ENCODE measurements at regions of chr9 and their contacts with region 1.

Region 1: DNA sequence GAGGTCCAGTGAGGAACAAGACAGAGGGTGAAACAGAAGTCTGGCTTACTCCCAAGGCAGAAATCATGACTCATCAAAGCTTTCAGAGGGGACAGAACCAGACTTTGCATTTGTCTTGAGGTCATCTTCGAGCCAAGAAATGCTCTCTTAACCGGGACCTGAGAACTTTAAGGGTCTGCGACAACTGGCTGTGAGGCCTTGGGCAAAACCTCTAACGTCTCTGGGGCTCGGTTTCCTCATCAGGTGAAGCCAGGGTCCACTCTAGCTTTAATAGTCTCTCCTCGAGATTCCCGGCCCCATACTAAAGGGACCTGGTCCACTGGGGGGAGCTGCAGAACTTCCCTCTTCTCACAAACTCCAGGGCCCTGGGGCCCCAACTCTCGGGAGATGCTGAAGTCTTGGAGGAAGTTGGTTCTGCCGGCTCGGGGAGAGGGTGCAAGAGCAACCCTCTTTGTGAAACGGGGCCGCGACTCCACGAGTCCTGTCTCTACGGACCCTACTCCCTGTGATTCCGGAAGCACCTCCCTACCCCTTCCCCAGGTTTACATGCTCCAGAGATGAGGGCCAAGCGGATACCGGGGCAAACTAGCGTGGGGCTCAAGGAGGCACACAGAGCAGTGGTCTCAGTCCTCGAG is 2.6 kb downstream of the GLIS3 start:
- DNase-seq: peak; percentile 12 to 47 (median 29)
- ATAC-seq: peak; percentile 55
- H3K4me3 ChIP-seq: peak overlapping the region; percentile 74
- H3K4me3 Mint-ChIP-seq: peak overlapping the region; percentile 93 to 98 (median 96)
- H3K27ac ChIP-seq: peak overlapping the region; percentile 68
- H3K27ac Mint-ChIP-seq: peak overlapping the region; percentile 80 to 97 (median 88)
- H3K4me1 ChIP-seq: peaks cover 0 to 4% of the 10 kb centered on the region in 2 donors
- H3K4me1 Mint-ChIP-seq: peaks cover 15 to 34% (median 21%) of the 10 kb centered on the region in 7 donors
- H3K27me3 ChIP-seq: no peaks in the 10 kb centered on the region
- H3K27me3 Mint-ChIP-seq: peaks cover 0 to 67% (median 28%) of the 10 kb centered on the region in 5 donors

Region 2: GRCh38 chr9:3473405-3473804 is 823.9 kb before region 1 on chr9:
- CTCF ChIA-PET with region 1: no interaction called
- POLR2A ChIA-PET with region 1: no interaction called
- intact Hi-C with region 1: loop called (anchors 5 kb)
- DNase-seq: no peak
- ATAC-seq: peak; percentile 57
- H3K4me3 ChIP-seq: no peak overlapping the region
- H3K4me3 Mint-ChIP-seq: no peak overlapping the region
- H3K27ac ChIP-seq: no peak overlapping the region
- H3K27ac Mint-ChIP-seq: peak overlapping the region in 1 of 9 donors; percentile 0
- H3K4me1 ChIP-seq: peaks cover 6 to 15% of the 10 kb centered on the region in 2 donors
- H3K4me1 Mint-ChIP-seq: peaks cover 24 to 60% (median 43%) of the 10 kb centered on the region in 7 donors
- H3K27me3 ChIP-seq: no peaks in the 10 kb centered on the region
- H3K27me3 Mint-ChIP-seq: no peaks in the 10 kb centered on the region

Region 3: GRCh38 chr9:4237748-4238511 is 59.3 kb before region 1 on chr9:
- CTCF ChIA-PET with region 1: no interaction called
- POLR2A ChIA-PET with region 1: interaction called, 4 read pairs
- intact Hi-C with region 1: loop called in 1 of 2 experiments (anchors 2 kb)
- DNase-seq: peak in 4 of 9 donors; percentile 7 to 26 (median 10)
- ATAC-seq: peak; percentile 56
- H3K4me3 ChIP-seq: peak overlapping the region; percentile 19
- H3K4me3 Mint-ChIP-seq: peak overlapping the region; percentile 43 to 85 (median 79)
- H3K27ac ChIP-seq: peak overlapping the region; percentile 14
- H3K27ac Mint-ChIP-seq: peak overlapping the region; percentile 35 to 88 (median 74)
- H3K4me1 ChIP-seq: peaks cover 0 to 14% of the 10 kb centered on the region in 2 donors
- H3K4me1 Mint-ChIP-seq: peaks cover 8 to 48% (median 39%) of the 10 kb centered on the region in 7 donors
- H3K27me3 ChIP-seq: no peaks in the 10 kb centered on the region
- H3K27me3 Mint-ChIP-seq: no peaks in the 10 kb centered on the region

Region 4: DNA sequence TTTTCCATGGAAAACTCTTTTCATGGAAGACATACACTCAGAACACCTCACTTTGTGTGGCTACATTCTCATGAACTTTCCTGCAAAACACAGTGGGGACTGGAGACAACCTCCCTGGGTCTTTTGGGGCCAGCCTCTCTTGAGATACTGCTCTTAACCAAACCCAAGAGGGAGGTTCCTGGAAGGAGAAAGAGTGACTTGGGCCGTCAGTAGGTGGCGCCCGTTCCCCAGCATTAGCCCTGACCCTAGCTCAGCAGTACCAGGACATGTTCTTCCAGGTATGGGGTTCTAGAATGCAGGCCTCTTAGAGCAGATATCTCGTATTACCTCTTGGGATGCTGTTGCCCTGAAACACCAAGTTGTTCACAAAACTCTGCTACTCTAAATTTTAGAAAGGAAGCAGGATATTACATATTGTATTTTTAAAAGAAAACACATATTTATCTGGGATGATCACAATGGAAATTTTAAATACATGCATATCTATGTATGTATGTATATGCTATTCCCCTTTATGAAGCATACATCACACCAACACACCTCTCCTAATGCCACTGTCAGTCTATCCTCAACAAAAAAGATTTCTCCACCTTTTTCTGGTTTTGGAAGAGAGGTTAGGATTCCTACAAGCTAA is 18.4 kb after region 1 on chr9:
- CTCF ChIA-PET with region 1: interaction called, 4 read pairs
- POLR2A ChIA-PET with region 1: interaction called, 8 read pairs
- intact Hi-C with region 1: loop called in 1 of 2 experiments (anchors 1 kb)
- DNase-seq: peak; percentile 37 to 74 (median 62)
- ATAC-seq: peak; percentile 89
- H3K4me3 ChIP-seq: no peak overlapping the region
- H3K4me3 Mint-ChIP-seq: no peak overlapping the region
- H3K27ac ChIP-seq: no peak overlapping the region
- H3K27ac Mint-ChIP-seq: no peak overlapping the region
- H3K4me1 ChIP-seq: no peaks in the 10 kb centered on the region
- H3K4me1 Mint-ChIP-seq: peaks cover 0 to 17% (median 6%) of the 10 kb centered on the region in 7 donors
- H3K27me3 ChIP-seq: no peaks in the 10 kb centered on the region
- H3K27me3 Mint-ChIP-seq: peaks cover 0 to 13% (median 0%) of the 10 kb centered on the region in 5 donors

Region 5: GRCh38 chr9:4339357-4339756 is 42.1 kb after region 1 on chr9:
- CTCF ChIA-PET with region 1: no interaction called
- POLR2A ChIA-PET with region 1: interaction called, 3 read pairs
- intact Hi-C with region 1: loop called (anchors 1 kb)
- DNase-seq: peak; percentile 62 to 84 (median 77)
- ATAC-seq: peak; percentile 90
- H3K4me3 ChIP-seq: no peak overlapping the region
- H3K4me3 Mint-ChIP-seq: peak overlapping the region in 9 of 10 donors; percentile 10 to 70 (median 48)
- H3K27ac ChIP-seq: no peak overlapping the region
- H3K27ac Mint-ChIP-seq: peak overlapping the region; percentile 16 to 92 (median 44)
- H3K4me1 ChIP-seq: no peaks in the 10 kb centered on the region
- H3K4me1 Mint-ChIP-seq: peaks cover 3 to 8% (median 7%) of the 10 kb centered on the region in 7 donors
- H3K27me3 ChIP-seq: no peaks in the 10 kb centered on the region
- H3K27me3 Mint-ChIP-seq: peaks cover 0 to 2% (median 0%) of the 10 kb centered on the region in 5 donors

Region 6: GRCh38 chr9:4740638-4741364 is 443.5 kb after region 1 on chr9 and contains the start of gene AK3:
- CTCF ChIA-PET with region 1: no interaction called
- POLR2A ChIA-PET with region 1: no interaction called
- intact Hi-C with region 1: loop called in 1 of 2 experiments (anchors 5 kb)
- DNase-seq: peak; percentile 72 to 85 (median 83)
- ATAC-seq: peak; percentile 95
- H3K4me3 ChIP-seq: peak within 1 kb of the TSS; percentile 73
- H3K4me3 Mint-ChIP-seq: peak within 1 kb of the TSS; percentile 88 to 99 (median 94)
- H3K27ac ChIP-seq: peak within 1 kb of the TSS; percentile 86
- H3K27ac Mint-ChIP-seq: peak within 1 kb of the TSS; percentile 86 to 98 (median 93)
- H3K4me1 ChIP-seq: peaks cover 10 to 16% of the 10 kb centered on the region in 2 donors
- H3K4me1 Mint-ChIP-seq: peaks cover 22 to 49% (median 40%) of the 10 kb centered on the region in 7 donors
- H3K27me3 ChIP-seq: no peaks in the 10 kb centered on the region
- H3K27me3 Mint-ChIP-seq: no peaks in the 10 kb centered on the region
- total RNA-seq, gene AK3: 18.0 to 34.8 (median 25.8) TPM

Region 7: GRCh38 chr9:5843794-5844504 is 1546.7 kb after region 1 on chr9:
- CTCF ChIA-PET with region 1: no interaction called
- POLR2A ChIA-PET with region 1: no interaction called
- intact Hi-C with region 1: loop called in 1 of 2 experiments (anchors 10 kb)
- DNase-seq: peak in 2 of 9 donors; percentile 7 to 22
- ATAC-seq: peak; percentile 20
- H3K4me3 ChIP-seq: peak overlapping the region; percentile 5
- H3K4me3 Mint-ChIP-seq: peak overlapping the region; percentile 75 to 85 (median 80)
- H3K27ac ChIP-seq: peak overlapping the region; percentile 24
- H3K27ac Mint-ChIP-seq: peak overlapping the region; percentile 58 to 93 (median 91)
- H3K4me1 ChIP-seq: peaks cover 45 to 47% of the 10 kb centered on the region in 2 donors
- H3K4me1 Mint-ChIP-seq: peaks cover 50 to 83% (median 64%) of the 10 kb centered on the region in 7 donors
- H3K27me3 ChIP-seq: no peaks in the 10 kb centered on the region
- H3K27me3 Mint-ChIP-seq: no peaks in the 10 kb centered on the region